PC-9 (cell line): ENCODE measurements at regions of chrX and their contacts with region 1.

Region 1: DNA sequence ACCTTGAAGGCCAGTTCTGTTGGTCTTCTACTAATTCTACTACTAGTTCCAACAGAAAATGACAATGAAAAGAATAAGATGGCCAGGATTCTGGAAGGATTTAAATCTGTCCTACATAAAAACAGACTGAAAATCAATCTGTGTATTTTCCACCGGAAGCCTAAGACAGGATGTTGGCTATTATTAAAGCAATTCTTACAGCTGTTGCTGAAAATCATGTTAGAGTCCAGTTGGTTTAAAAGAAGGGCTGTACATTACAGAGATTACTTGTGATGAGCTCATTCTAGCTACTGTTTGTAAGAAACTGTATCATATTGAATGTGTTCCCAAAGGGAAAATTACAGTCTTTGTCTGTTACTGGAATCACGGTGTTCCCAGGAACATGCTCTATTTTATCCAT is 54.8 kb upstream of the MAGEB16 start:
- DNase-seq: no peak
- H3K4me3 ChIP-seq: no peak overlapping the region
- H3K27ac ChIP-seq: no peak overlapping the region
- H3K4me1 ChIP-seq: no peaks in the 10 kb centered on the region
- H3K27me3 ChIP-seq: no peaks in the 10 kb centered on the region
- CTCF ChIP-seq: no peak

Region 2: DNA sequence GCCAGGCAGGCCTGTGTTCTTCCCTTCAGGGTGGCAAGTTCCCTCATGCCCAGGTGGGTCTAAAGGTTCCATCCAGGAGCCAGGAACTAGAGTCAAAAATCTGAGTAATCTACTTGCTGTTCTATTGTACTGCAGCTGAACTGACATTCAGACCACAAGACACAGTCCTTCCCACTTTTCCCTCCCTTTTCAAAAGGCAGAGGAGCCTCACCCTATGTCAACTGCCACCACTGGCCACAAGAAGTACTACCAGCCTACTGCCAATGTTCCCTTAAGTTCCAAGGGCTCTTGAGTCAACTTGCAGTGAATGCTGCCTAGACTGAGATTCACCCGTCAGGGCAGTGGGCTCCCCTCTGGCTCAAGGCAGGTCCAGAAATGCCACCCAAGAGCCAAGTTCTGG is 667.3 kb before region 1 on chrX:
- CTCF ChIA-PET with region 1: no interaction called
- POLR2A ChIA-PET with region 1: no interaction called
- intact Hi-C with region 1: no loop called
- DNase-seq: no peak
- H3K4me3 ChIP-seq: no peak overlapping the region
- H3K27ac ChIP-seq: no peak overlapping the region
- H3K4me1 ChIP-seq: no peaks in the 10 kb centered on the region
- H3K27me3 ChIP-seq: no peaks in the 10 kb centered on the region
- CTCF ChIP-seq: no peak

Region 3: GRCh38 chrX:35166023-35166422 is 577.3 kb before region 1 on chrX:
- CTCF ChIA-PET with region 1: no interaction called
- POLR2A ChIA-PET with region 1: no interaction called
- intact Hi-C with region 1: loop called (anchors 5 kb)
- DNase-seq: no peak
- H3K4me3 ChIP-seq: no peak overlapping the region
- H3K27ac ChIP-seq: no peak overlapping the region
- H3K4me1 ChIP-seq: no peaks in the 10 kb centered on the region
- H3K27me3 ChIP-seq: no peaks in the 10 kb centered on the region
- CTCF ChIP-seq: no peak

Region 4: GRCh38 chrX:35826504-35826903 is 83.2 kb after region 1 on chrX:
- CTCF ChIA-PET with region 1: no interaction called
- POLR2A ChIA-PET with region 1: no interaction called
- intact Hi-C with region 1: no loop called
- DNase-seq: peak in 1 of 2 experiments; percentile 3
- H3K4me3 ChIP-seq: no peak overlapping the region
- H3K27ac ChIP-seq: no peak overlapping the region
- H3K4me1 ChIP-seq: peaks cover 9% of the 10 kb centered on the region; the same call in 1 of the 2 replicates
- H3K27me3 ChIP-seq: no peaks in the 10 kb centered on the region
- CTCF ChIP-seq: no peak

Region 5: GRCh38 chrX:35880601-35881000 is 137.3 kb after region 1 on chrX:
- CTCF ChIA-PET with region 1: no interaction called
- POLR2A ChIA-PET with region 1: no interaction called
- intact Hi-C with region 1: no loop called
- DNase-seq: no peak
- H3K4me3 ChIP-seq: no peak overlapping the region
- H3K27ac ChIP-seq: no peak overlapping the region
- H3K4me1 ChIP-seq: no peaks in the 10 kb centered on the region
- H3K27me3 ChIP-seq: no peaks in the 10 kb centered on the region
- CTCF ChIP-seq: no peak